Activated B cell treated with CpG ODN at 0.5 μM for 24 hours (primary cell): ENCODE measurements at regions of chr7 and their contacts with region 1.

Region 1: DNA sequence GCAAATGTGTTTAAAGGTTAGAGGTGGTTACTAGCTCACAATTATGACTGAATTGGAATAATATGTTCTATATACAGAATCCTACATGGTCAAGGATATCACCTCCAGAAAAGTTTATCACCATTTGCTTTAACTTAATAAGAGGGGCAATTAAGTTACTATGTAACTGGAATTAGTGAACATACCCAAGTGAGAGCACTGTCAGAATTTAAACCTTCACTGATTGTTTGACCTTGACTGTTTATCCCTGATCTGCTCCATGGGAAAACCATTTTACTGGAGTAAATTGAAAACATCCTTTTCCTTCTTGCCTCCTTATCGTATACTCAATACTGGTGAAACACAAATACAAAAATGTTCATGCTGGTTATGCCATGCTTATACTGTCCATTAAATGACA is 107.4 kb downstream of the SEMA3D start:
- DNase-seq: no peak
- ATAC-seq: no peak
- H3K4me3 Mint-ChIP-seq: no peak overlapping the region
- H3K27ac Mint-ChIP-seq: no peak overlapping the region
- H3K4me1 Mint-ChIP-seq: no peaks in the 10 kb centered on the region
- H3K27me3 Mint-ChIP-seq: no peaks in the 10 kb centered on the region
- CTCF ChIP-seq: no peak

Region 2: GRCh38 chr7:85115862-85116261 is 36.4 kb after region 1 on chr7:
- CTCF ChIA-PET with region 1: no interaction called
- POLR2A ChIA-PET with region 1: no interaction called
- intact Hi-C with region 1: loop called (anchors 1 kb)
- DNase-seq: no peak
- ATAC-seq: no peak
- H3K4me3 Mint-ChIP-seq: no peak overlapping the region
- H3K27ac Mint-ChIP-seq: no peak overlapping the region
- H3K4me1 Mint-ChIP-seq: no peaks in the 10 kb centered on the region
- H3K27me3 Mint-ChIP-seq: no peaks in the 10 kb centered on the region
- CTCF ChIP-seq: no peak